Right ventricle myocardium inferior (tissue), 1 donor: ENCODE measurements at regions of chr13 and their contacts with region 1.

Region 1: DNA sequence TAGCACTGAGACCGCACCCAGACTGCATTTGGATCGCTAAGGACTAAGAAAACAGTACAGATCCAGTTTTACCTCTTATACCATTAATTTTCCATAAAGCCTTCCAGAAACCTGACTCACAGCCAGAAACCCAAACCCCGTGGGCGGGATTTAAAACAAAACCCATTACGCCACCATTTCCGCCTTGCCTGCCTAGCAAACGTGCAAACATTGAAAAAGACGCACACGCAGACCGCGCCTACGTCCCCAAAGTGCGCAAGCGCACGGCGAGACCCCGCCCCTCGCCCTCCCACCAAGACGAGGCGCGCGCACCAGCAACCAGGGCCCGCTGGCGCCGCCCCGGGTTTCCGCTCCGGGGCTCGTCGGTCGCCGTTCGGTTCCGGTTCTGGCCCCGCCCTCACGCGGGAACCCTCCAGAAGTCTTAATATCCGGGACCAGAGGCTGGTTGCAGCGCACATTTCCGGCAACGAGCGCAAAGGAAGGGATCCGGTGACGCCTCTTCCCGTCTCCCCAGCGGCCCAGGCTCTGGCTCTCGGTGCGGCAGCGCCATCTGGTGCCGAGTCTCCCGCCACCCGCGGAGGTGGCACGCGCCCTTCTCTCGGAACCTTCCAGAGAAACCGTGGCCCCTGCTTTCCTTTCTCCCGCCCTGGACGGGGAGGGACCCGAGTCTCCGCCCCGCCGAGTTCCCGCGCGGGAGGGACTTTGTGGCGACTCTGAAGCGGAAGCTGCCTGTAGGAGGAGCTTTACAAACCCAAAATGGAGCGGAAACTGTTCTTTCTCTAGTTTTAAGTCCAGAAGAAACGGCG is 256.9 kb upstream of the STARD13 start:
- DNase-seq: peak; percentile 99
- ATAC-seq: peak; percentile 97

Region 2: DNA sequence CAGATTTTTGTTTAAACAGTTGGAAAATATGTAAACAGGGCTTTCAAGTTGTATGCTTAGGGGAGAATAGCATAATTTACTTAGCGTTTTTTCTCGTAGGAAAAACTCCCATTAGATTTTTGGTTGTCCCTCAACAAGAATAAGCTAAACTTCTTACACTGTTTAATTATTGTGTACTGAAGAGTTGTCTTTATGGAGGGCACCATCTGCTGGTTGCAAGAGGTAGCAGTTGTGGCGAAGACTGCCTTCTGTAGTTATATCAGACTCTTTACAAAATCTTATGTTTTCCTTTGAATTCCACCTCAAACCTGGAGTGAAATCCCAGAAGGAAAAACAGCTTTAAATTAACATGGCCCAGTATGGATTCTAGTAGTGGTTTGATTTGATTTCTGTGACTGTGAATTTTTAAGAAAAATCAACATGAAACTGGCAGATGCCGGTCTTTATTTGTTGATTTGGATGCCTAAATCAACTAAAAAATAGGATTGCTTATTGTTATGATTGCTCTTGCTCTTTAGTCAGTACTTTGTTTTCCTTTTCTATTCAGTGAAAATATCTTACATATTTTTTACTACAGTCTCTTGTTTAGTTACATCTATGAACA is 902.9 kb before region 1 on chr13:
- intact Hi-C with region 1: loop called (anchors 5 kb)
- DNase-seq: no peak
- ATAC-seq: peak; percentile 57

Region 3: DNA sequence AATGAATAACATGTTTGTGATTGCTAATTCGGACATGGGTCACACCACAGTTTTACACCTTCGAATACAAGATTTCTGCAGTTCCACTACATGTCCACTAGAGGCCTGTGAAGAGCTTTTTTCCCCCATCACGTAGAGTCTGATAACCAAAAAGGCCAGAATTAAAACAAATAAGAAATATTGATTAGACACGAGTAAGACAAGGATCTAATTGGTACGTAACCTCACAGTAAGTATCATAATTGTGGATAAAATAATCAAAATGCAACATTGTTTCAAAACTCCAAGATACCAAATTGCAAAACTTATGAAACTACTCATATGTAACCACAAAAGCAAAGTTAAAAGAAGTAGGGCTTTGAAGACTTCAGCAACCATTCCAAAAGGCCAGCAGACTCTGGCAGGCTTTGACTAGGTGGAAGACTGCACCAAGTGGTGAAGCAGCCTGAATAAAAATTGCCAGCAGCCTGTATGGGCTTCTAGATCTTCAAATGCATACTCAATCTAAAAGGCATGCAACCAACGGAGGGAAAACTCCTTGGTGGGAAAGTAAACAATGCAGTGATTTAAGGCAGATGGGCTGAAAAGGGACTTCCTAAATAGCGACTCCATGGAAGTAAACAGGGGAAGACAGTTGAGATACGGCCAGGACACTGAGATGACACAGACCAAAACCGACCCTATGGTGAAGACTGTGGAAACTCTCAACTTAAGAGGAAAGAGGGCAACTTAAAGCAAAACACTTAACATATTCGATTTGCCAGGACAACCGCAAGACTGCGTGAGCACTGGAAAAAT is 313.6 kb before region 1 on chr13:
- intact Hi-C with region 1: loop called (anchors 5 kb)
- DNase-seq: no peak
- ATAC-seq: peak; percentile 9

Region 4: GRCh38 chr13:33349986-33350826 is 192.3 kb before region 1 on chr13:
- intact Hi-C with region 1: loop called (anchors 2 kb)
- DNase-seq: peak; percentile 77
- ATAC-seq: peak; percentile 85

Region 5: GRCh38 chr13:33462109-33462508 is 80.4 kb before region 1 on chr13:
- intact Hi-C with region 1: no loop called
- DNase-seq: no peak
- ATAC-seq: no peak

Region 6: GRCh38 chr13:33480561-33480960 is 61.9 kb before region 1 on chr13:
- intact Hi-C with region 1: no loop called
- DNase-seq: no peak
- ATAC-seq: no peak

Region 7: GRCh38 chr13:33678906-33679657 is 136.6 kb after region 1 on chr13:
- intact Hi-C with region 1: loop called (anchors 5 kb)
- DNase-seq: peak; percentile 74
- ATAC-seq: peak; percentile 26